A673 (cell line): ENCODE measurements at regions of chr11 and their contacts with region 1.

Region 1: DNA sequence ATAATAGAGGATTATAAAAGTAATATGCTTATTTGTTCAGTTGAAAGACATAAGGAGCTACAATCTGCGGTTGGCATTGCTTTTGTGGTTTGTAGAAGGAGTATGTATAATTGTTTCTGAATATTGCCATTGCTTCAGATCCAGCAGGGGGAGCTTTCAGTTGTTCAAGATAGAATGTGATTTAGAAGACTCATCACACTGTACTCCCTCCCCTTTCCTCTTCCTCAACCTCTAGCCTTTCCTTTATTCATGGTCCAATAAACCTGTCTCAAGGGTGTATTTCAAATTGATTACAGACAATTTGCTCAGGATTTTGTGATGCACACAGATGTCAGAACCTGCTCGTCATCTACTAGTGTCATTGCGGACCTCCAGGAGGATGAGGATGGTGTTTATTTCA is 9.8 kb downstream of the PRMT3 start:
- DNase-seq: peak; percentile 72
- H3K4me3 ChIP-seq: no peak overlapping the region
- H3K27ac ChIP-seq: no peak overlapping the region
- H3K4me1 ChIP-seq: no peaks in the 10 kb centered on the region
- H3K27me3 ChIP-seq: no peaks in the 10 kb centered on the region
- CTCF ChIP-seq: peak; percentile 70

Region 2: GRCh38 chr11:20566591-20567434 is 169.5 kb after region 1 on chr11:
- CTCF ChIA-PET with region 1: no interaction called
- POLR2A ChIA-PET with region 1: no interaction called
- intact Hi-C with region 1: no loop called
- DNase-seq: no peak
- H3K4me3 ChIP-seq: no peak overlapping the region
- H3K27ac ChIP-seq: no peak overlapping the region
- H3K4me1 ChIP-seq: no peaks in the 10 kb centered on the region
- H3K27me3 ChIP-seq: peaks cover 6% of the 10 kb centered on the region
- CTCF ChIP-seq: no peak

Region 3: GRCh38 chr11:20609727-20610707 is 212.7 kb after region 1 on chr11:
- CTCF ChIA-PET with region 1: interaction called, 6 read pairs
- POLR2A ChIA-PET with region 1: no interaction called
- intact Hi-C with region 1: loop called (anchors 2 kb)
- DNase-seq: peak; percentile 84
- H3K4me3 ChIP-seq: peak overlapping the region; percentile 24
- H3K27ac ChIP-seq: no peak overlapping the region
- H3K4me1 ChIP-seq: no peaks in the 10 kb centered on the region
- H3K27me3 ChIP-seq: peaks cover 40% of the 10 kb centered on the region
- CTCF ChIP-seq: peak; percentile 90

Region 4: DNA sequence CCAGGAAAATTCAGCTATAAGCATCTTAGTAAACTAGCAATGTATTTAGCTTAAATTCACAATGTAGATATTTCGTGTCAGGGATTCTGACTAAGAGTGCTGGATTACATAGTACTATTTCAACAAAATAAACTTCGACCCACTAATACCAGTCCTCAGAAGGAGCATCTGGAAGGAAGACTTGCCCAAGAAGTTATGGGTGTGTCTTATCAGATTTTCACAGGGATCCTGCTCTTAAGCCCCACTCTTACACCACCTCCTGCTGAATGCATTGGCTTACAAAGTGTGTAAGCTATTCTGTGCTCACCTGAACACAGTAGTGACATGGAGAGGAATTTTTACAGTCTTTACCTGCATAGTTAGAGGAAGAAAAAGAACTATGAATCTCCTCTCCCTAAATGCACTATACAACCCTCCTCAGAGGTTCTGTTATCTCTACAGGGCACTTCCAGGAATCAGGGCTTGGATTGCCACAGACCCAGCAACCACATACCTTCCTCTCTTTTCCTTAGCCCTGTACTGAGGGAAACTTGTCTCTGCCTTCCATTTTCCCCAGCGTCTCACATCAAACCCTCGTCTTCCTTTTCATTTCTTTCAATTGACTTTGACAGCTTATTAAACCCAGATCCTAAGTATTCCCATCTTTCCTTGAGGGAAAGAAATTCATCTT is 1760.4 kb after region 1 on chr11:
- CTCF ChIA-PET with region 1: no interaction called
- POLR2A ChIA-PET with region 1: no interaction called
- intact Hi-C with region 1: loop called (anchors 10 kb)
- DNase-seq: no peak
- H3K4me3 ChIP-seq: no peak overlapping the region
- H3K27ac ChIP-seq: no peak overlapping the region
- H3K4me1 ChIP-seq: no peaks in the 10 kb centered on the region
- H3K27me3 ChIP-seq: no peaks in the 10 kb centered on the region
- CTCF ChIP-seq: no peak